GM10248 (cell line): ENCODE measurements at regions of chr2 and their contacts with region 1.

Region 1: DNA sequence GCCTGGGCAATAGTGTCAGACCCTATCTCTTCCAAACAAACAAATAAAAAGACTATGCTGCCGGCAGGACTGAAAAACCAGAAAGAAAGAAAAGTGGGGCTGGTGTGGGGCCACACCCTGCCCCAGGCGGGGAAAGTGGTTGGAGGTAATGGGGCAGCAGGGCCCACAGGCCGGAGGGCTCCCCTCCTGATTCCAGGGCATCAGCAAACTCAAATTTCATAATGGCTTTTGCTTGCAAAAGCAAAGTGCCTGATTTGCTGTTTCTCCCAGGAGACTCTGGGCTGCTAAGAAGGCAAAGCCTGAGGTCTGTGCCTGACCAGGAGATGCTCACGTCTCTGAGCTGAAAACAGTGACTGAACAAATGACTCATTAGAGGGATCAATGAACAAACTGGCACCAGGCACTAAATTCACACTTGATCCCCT is 121.9 kb downstream of the HDAC4 start:
- DNase-seq: no peak
- CTCF ChIP-seq: no peak

Region 2: DNA sequence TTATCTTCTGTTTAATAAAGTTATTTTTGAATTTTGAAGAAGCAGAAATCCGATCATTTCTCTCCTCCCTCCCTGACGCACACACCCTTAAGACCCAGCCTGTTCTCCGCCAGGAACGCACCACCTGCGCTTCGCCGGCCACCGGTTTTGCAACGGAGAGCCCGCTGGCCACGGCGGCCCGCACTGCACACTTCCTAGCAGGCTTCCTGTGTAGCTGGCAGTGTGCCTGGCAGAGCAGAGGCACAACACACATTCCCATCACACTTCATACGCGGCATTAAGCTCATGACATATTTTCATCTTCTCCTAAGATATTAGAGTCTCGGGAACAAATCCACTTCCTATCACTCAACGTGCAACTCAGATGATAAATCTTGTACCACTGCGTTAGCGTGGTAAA is 26.2 kb before region 1 on chr2:
- CTCF ChIA-PET with region 1: no interaction called
- POLR2A ChIA-PET with region 1: no interaction called
- DNase-seq: no peak
- CTCF ChIP-seq: no peak

Region 3: DNA sequence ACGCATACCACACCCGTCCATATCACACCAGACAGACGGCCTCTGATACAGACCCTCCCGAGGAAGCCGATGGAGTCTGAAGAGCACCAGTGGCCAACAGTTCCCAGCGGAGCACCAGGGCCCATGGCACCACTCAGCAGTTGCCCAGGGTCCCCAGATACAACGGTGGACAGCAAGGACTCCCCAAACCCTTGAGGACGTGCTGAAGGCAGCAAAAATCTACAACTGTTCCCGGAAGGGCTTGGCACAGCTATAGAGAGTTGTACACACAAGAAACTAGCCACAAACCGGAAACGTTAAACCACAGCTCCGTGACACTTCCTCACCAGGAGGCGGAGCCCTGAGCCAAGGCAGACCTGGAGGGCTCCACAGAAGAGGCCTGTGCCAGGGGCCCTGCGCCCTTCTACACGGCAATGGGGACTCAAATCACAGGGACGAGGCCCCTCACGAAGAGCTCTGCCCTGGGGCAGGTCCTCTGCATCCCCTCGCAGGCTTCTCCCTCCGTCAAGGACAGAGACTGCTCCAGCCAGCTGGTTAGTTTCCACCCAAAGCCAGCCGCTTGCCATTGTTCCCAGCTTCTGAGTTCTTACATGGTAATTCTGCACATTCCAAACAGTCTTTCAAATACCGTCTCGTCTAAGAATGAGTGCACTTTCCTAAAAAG is 11.5 kb before region 1 on chr2:
- CTCF ChIA-PET with region 1: interaction called, 10 read pairs
- POLR2A ChIA-PET with region 1: no interaction called
- DNase-seq: peak; percentile 85
- CTCF ChIP-seq: peak; percentile 49

Region 4: GRCh38 chr2:239326831-239327535 is 48.0 kb after region 1 on chr2:
- CTCF ChIA-PET with region 1: no interaction called
- POLR2A ChIA-PET with region 1: no interaction called
- DNase-seq: peak; percentile 73
- CTCF ChIP-seq: no peak